ENCODE measurements at regions of chr12 and their contacts with region 1.

Region 1: GRCh38 chr12:34126239-34126641 is 103.9 kb downstream of the ALG10 start:
- DNase-seq: no peak
- H3K4me3 Mint-ChIP-seq: peak overlapping the region; percentile 40
- H3K27ac Mint-ChIP-seq: peak overlapping the region; percentile 7
- H3K4me1 Mint-ChIP-seq: peaks cover 9% of the 10 kb centered on the region
- H3K27me3 Mint-ChIP-seq: no peaks in the 10 kb centered on the region
- CTCF ChIP-seq: no peak

Region 2: DNA sequence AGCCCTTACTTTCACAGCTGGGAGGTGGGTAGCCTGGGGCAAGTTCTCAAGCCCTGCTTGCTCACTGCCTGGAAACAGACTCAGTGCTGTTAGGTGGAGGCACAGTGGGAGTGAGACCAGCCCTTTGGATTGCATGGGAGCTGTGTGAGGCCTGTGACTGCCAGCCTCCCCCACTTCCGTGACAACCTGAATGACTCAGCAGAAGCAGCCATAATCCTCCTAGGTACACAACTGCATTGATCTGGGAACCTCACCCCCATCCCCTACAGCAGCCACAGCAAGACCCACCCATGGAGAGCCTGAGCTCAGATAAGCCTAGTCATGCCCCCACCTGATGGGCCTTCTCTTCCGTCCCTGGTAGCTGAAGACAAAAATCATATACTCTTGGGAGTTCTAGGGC is 77.5 kb before region 1 on chr12:
- CTCF ChIA-PET with region 1: no interaction called
- intact Hi-C with region 1: loop called (anchors 5 kb)
- DNase-seq: no peak
- H3K4me3 Mint-ChIP-seq: no peak overlapping the region
- H3K27ac Mint-ChIP-seq: no peak overlapping the region
- H3K4me1 Mint-ChIP-seq: peaks cover 9% of the 10 kb centered on the region
- H3K27me3 Mint-ChIP-seq: no peaks in the 10 kb centered on the region
- CTCF ChIP-seq: no peak

Region 3: GRCh38 chr12:34166427-34167060 is 40.3 kb after region 1 on chr12:
- CTCF ChIA-PET with region 1: no interaction called
- intact Hi-C with region 1: loop called (anchors 5 kb)
- DNase-seq: no peak
- H3K4me3 Mint-ChIP-seq: no peak overlapping the region
- H3K27ac Mint-ChIP-seq: no peak overlapping the region
- H3K4me1 Mint-ChIP-seq: no peaks in the 10 kb centered on the region
- H3K27me3 Mint-ChIP-seq: no peaks in the 10 kb centered on the region
- CTCF ChIP-seq: no peak

Region 4: DNA sequence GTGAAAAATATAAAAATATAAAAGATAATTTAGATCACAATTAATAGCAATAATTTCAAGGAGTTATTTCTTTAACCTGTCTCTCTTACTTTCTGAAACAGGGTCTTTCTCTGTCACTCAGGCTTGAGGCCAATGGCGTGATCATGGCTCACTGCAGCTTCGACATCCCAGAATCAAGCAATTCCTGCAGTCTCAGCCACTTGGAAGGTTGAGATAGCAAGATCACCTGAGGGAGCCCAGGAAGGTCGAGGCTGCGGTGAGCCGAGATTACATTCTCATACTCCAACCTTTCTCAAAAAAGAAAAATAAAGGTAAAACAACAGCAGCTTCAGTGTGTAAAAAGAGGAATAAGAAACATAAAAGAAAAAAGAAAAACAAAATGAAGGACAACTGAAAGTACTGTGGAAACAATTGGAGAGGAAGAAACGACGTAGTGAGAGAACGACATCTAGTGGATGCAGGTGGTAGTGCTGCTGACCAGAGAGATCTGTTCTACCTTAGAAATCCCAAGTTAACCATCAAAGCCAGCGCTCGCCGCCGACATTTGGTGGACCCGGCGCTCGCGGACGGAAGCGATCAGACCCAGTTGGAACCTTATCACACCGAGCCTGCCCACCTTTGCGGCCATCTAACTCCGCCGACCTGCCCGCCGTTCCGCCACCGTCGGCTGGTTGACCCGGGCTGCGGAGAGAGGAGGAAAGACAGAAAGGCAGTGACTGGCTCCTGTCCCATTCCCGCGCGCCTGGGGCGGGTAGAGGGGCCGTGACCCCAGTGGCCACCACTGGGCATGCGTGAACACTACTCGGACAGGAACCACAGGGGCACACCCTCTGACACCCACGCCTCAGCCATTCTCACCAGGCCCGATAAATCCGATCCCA is 92.2 kb after region 1 on chr12:
- CTCF ChIA-PET with region 1: no interaction called
- intact Hi-C with region 1: loop called (anchors 1 kb)
- DNase-seq: peak; percentile 76
- H3K4me3 Mint-ChIP-seq: peak overlapping the region; percentile 69
- H3K27ac Mint-ChIP-seq: peak overlapping the region; percentile 55
- H3K4me1 Mint-ChIP-seq: no peaks in the 10 kb centered on the region
- H3K27me3 Mint-ChIP-seq: no peaks in the 10 kb centered on the region
- CTCF ChIP-seq: peak; percentile 65

Region 5: GRCh38 chr12:34625116-34625515 is 498.9 kb after region 1 on chr12:
- CTCF ChIA-PET with region 1: no interaction called
- intact Hi-C with region 1: loop called (anchors 1 kb)
- DNase-seq: peak; percentile 4
- H3K4me3 Mint-ChIP-seq: no peak overlapping the region
- H3K27ac Mint-ChIP-seq: no peak overlapping the region
- H3K4me1 Mint-ChIP-seq: no peaks in the 10 kb centered on the region
- H3K27me3 Mint-ChIP-seq: no peaks in the 10 kb centered on the region
- CTCF ChIP-seq: no peak